ENCODE measurements at regions of chr9 and their contacts with region 1.

Region 1: GRCh38 chr9:70392850-70393249 is 21.6 kb downstream of the KLF9 start:
- DNase-seq: no peak
- ATAC-seq: no peak
- H3K4me3 ChIP-seq: no peak overlapping the region
- H3K27ac ChIP-seq: no peak overlapping the region
- H3K4me1 ChIP-seq: peaks cover 7% of the 10 kb centered on the region
- H3K27me3 ChIP-seq: no peaks in the 10 kb centered on the region
- CTCF ChIP-seq: no peak
- EP300 ChIP-seq: no peak
- POLR2A ChIP-seq: no peak
- RAD21 ChIP-seq: no peak

Region 2: DNA sequence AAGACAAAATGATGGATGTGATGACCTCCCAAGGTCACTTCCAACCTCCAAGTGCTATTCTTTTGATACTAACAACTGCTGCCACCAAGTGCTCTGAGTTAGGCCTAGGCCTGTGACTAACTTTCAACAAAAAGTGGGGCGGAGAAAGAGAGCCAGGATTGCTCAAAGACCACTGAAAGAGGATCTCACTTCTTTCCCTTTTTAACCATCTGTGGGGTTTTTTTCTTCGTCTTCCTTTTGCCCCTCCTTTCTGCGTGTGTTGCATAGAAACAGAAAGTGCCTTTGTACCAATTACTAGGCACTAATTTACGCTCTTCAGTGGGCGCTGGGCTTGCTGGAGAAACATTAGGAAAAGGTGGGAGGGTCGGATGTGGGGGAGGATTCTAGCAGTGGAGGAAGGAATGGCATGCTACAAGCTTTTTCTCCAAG is 13.6 kb after region 1 on chr9:
- CTCF ChIA-PET with region 1: interaction called, 10 read pairs
- POLR2A ChIA-PET with region 1: interaction called, 4 read pairs
- RAD21 ChIA-PET with region 1: no interaction called
- SMC1A ChIA-PET with region 1: interaction called, 6 read pairs
- in situ Hi-C with region 1: no loop called
- intact Hi-C with region 1: no loop called
- DNase-seq: no peak
- ATAC-seq: peak; percentile 80
- H3K4me3 ChIP-seq: no peak overlapping the region
- H3K27ac ChIP-seq: peak overlapping the region; percentile 48
- H3K4me1 ChIP-seq: peaks cover 13% of the 10 kb centered on the region
- H3K27me3 ChIP-seq: no peaks in the 10 kb centered on the region
- CTCF ChIP-seq: 0 out of 6 replicates have a peak, but pooled peaks of 1 of the 3 experiments have one; percentile 7
- EP300 ChIP-seq: no peak
- POLR2A ChIP-seq: no peak
- RAD21 ChIP-seq: peak; percentile 37

Region 3: GRCh38 chr9:70883056-70883455 is 490.2 kb after region 1 on chr9:
- CTCF ChIA-PET with region 1: no interaction called
- POLR2A ChIA-PET with region 1: no interaction called
- RAD21 ChIA-PET with region 1: no interaction called
- SMC1A ChIA-PET with region 1: no interaction called
- in situ Hi-C with region 1: no loop called
- intact Hi-C with region 1: no loop called
- DNase-seq: no peak
- ATAC-seq: no peak
- H3K4me3 ChIP-seq: no peak overlapping the region
- H3K27ac ChIP-seq: no peak overlapping the region
- H3K4me1 ChIP-seq: no peaks in the 10 kb centered on the region
- H3K27me3 ChIP-seq: no peaks in the 10 kb centered on the region; a peak in 1 of 4 replicates
- CTCF ChIP-seq: no peak
- EP300 ChIP-seq: no peak
- POLR2A ChIP-seq: no peak
- RAD21 ChIP-seq: no peak

Measured in GM12878 (cell line).